ENCODE measurements at regions of chr22 and their contacts with region 1.

Region 1: GRCh38 chr22:36649066-36649465 is 54.5 kb downstream of the CACNG2 start:
- DNase-seq: no peak
- ATAC-seq: no peak
- H3K4me3 ChIP-seq: no peak overlapping the region
- H3K27ac ChIP-seq: no peak overlapping the region
- H3K4me1 ChIP-seq: no peaks in the 10 kb centered on the region
- H3K27me3 ChIP-seq: peaks cover 55% of the 10 kb centered on the region
- CTCF ChIP-seq: no peak
- POLR2A ChIP-seq: no peak
- RAD21 ChIP-seq: no peak

Region 2: GRCh38 chr22:36385491-36386350 is 263.3 kb before region 1 on chr22:
- CTCF ChIA-PET with region 1: no interaction called
- POLR2A ChIA-PET with region 1: no interaction called
- RAD21 ChIA-PET with region 1: no interaction called
- intact Hi-C with region 1: no loop called
- DNase-seq: no peak
- ATAC-seq: no peak
- H3K4me3 ChIP-seq: peak overlapping the region; percentile 88 to 97
- H3K27ac ChIP-seq: peak overlapping the region; percentile 97
- H3K4me1 ChIP-seq: peaks cover 40 to 62% of the 10 kb centered on the region in 2 experiments
- H3K27me3 ChIP-seq: no peaks in the 10 kb centered on the region
- CTCF ChIP-seq: no peak
- POLR2A ChIP-seq: no peak
- RAD21 ChIP-seq: no peak; the same call in 1 of the 2 replicates

Region 3: DNA sequence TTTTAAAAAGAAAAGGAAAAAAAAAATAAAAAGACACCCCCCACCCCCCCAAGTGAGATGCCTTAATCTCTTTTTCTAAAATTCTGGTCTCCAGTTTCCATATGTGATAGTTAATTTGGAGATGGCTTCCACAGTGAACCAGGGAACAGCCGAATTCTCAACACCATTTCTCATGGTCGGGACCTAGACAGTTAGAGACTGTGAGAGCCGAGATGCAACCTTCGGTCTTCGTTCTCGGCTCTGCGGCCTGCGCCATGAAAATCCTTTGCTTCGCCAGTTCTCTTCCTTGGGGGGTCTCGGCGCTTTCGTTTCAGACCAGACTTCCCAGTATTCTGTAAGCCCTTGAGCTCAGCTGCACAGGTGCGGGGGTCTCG is 53.8 kb after region 1 on chr22:
- CTCF ChIA-PET with region 1: no interaction called
- POLR2A ChIA-PET with region 1: no interaction called
- RAD21 ChIA-PET with region 1: no interaction called
- intact Hi-C with region 1: loop called (anchors 5 kb)
- DNase-seq: no peak
- ATAC-seq: no peak
- H3K4me3 ChIP-seq: no peak overlapping the region
- H3K27ac ChIP-seq: no peak overlapping the region
- H3K4me1 ChIP-seq: no peaks in the 10 kb centered on the region
- H3K27me3 ChIP-seq: peaks cover 78% of the 10 kb centered on the region
- CTCF ChIP-seq: no peak
- POLR2A ChIP-seq: no peak
- RAD21 ChIP-seq: no peak